Dorsolateral prefrontal cortex (tissue), 120 donors: ENCODE measurements at regions of chr3 and their contacts with region 1.

Region 1: GRCh38 chr3:184298759-184299496 is at the start of gene PSMD2:
- DNase-seq: peak; percentile 95 to 98 (median 97)
- H3K4me3 ChIP-seq: peak within 1 kb of the TSS; percentile 40 to 100 (median 94)
- H3K27ac ChIP-seq: peak within 1 kb of the TSS; percentile 4 to 94 (median 82)
- H3K27me3 ChIP-seq: no peaks in the 10 kb centered on the region
- CTCF ChIP-seq: peak in 33 of 56 donors; percentile 11 to 64 (median 34)
- total RNA-seq, gene PSMD2: 147 to 269 (median 208) TPM

Region 2: GRCh38 chr3:183895296-183895695 is 403.6 kb before region 1 on chr3:
- intact Hi-C with region 1: loop called in 1 of 2 experiments (anchors 10 kb)
- DNase-seq: peak in 1 of 10 donors; percentile 24
- H3K4me3 ChIP-seq: peak overlapping the region in 1 of 59 donors; percentile 29
- H3K27ac ChIP-seq: no peak overlapping the region
- H3K27me3 ChIP-seq: no peaks in the 10 kb centered on the region
- CTCF ChIP-seq: peak; percentile 62 to 93 (median 82)

Region 3: GRCh38 chr3:184174646-184175492 is 124.1 kb before region 1 on chr3 and contains the start of gene AP2M1:
- intact Hi-C with region 1: loop called in 1 of 2 experiments (anchors 2 kb)
- DNase-seq: peak; percentile 96 to 100 (median 99)
- H3K4me3 ChIP-seq: peak within 1 kb of the TSS; percentile 75 to 100 (median 99)
- H3K27ac ChIP-seq: peak within 1 kb of the TSS; percentile 61 to 99 (median 95)
- H3K27me3 ChIP-seq: no peaks in the 10 kb centered on the region
- CTCF ChIP-seq: peak in 23 of 56 donors; percentile 2 to 51 (median 18)
- total RNA-seq, gene AP2M1: 297 to 743 (median 543) TPM

Region 4: DNA sequence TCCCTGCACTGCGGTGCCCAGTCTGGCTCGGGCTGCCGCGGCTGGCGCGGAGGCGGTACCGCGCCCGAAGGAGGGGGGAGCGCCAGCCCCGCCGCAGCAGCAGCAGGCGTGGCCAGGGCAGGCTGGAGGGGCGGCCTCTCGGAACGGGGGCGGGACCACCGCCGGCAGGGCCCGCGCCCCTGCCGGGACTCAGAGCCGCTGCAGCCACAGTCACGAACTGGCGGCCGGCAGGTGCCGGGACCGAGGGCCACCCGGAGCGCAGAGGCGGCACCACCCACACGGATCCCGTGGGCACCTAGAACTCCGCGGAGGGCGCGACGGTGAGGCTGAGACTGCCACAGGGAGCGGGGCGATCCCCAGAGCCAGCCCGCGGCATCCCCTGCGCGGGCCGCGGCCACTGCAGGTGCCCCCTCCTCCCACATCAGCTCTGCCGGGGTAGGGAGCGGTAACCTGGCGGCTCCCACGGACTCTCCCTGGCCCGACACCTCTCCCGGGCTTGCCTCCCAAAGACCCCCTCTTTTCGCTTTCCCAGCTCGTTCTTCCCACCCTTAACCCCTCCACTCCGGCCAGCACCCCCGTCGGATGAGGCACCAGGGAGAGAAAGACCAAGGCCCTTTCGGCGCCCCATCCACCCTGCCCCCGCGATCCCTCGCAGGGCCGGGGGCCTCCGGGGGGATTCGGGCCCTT is 69.4 kb before region 1 on chr3 and contains the start of gene VWA5B2:
- intact Hi-C with region 1: no loop called
- DNase-seq: peak in 9 of 10 donors; percentile 40 to 82 (median 66)
- H3K4me3 ChIP-seq: peak within 1 kb of the TSS; percentile 48 to 80 (median 68)
- H3K27ac ChIP-seq: peak within 1 kb of the TSS in 48 of 59 donors; percentile 3 to 89 (median 63)
- H3K27me3 ChIP-seq: peaks cover 0 to 25% (median 3%) of the 10 kb centered on the region in 45 donors
- CTCF ChIP-seq: peak in 12 of 56 donors; percentile 7 to 25 (median 15)
- total RNA-seq, gene VWA5B2: 22.0 to 127 (median 48.6) TPM

Region 5: GRCh38 chr3:184249412-184250166 is 49.3 kb before region 1 on chr3 and contains the start of gene EEF1AKMT4:
- intact Hi-C with region 1: loop called in 1 of 2 experiments (anchors 5 kb)
- DNase-seq: peak; percentile 87 to 97 (median 95)
- H3K4me3 ChIP-seq: peak within 1 kb of the TSS; percentile 54 to 100 (median 85)
- H3K27ac ChIP-seq: peak within 1 kb of the TSS; percentile 48 to 94 (median 87)
- H3K27me3 ChIP-seq: no peaks in the 10 kb centered on the region
- CTCF ChIP-seq: peak in 51 of 56 donors; percentile 25 to 71 (median 49)
- total RNA-seq, gene EEF1AKMT4: 0.25 to 1.6 (median 0.52) TPM in 80 of 120 experiments, not detected in the others

Region 6: GRCh38 chr3:184335661-184336546 is 37.0 kb after region 1 on chr3:
- intact Hi-C with region 1: loop called in 1 of 2 experiments (anchors 2 kb)
- DNase-seq: peak; percentile 86 to 95 (median 92)
- H3K4me3 ChIP-seq: peak overlapping the region; percentile 50 to 93 (median 84)
- H3K27ac ChIP-seq: peak overlapping the region; percentile 75 to 98 (median 95)
- H3K27me3 ChIP-seq: no peaks in the 10 kb centered on the region
- CTCF ChIP-seq: peak in 5 of 56 donors; percentile 7 to 32 (median 11)